Left cardiac atrium (tissue), 4 donors: ENCODE measurements at regions of chr1 and their contacts with region 1.

Region 1: DNA sequence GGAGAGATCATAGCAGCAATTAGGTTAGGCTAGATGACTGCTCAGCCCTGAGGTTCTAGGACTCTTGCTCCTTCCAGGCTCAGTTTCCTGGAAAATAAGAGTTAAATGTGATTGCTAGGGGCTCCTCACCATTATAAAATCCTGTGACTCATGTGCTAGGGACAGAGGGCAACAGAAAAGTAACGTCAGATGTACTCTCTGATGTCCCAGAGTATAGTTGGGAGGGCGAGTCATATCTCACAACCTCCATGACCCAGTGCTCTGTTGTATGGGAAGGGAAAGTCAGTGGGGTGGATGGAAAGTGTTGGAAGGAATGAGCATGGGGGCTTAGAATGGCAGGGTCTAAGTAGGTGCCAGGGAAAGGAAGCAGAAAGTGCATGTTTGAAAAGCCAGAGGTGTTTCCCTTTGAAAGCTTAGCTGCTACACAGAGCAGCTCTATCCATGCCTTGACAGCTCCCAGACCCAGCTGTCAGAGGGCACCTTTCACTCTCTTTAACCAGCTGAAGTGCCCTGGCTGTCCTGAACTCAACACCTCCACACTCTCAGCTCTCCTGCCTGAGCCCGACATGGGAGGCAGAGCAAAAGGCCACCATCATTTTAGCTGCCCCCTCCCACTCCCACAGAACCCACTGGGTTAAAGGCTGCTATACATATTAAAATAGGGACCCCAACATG is 11.6 kb downstream of the GJA5 start:
- DNase-seq: peak; percentile 38
- ATAC-seq: peak; percentile 92 to 95

Region 2: GRCh38 chr1:147812799-147813198 is 64.0 kb after region 1 on chr1:
- intact Hi-C with region 1: loop called in 1 of 2 experiments (anchors 5 kb)
- DNase-seq: no peak
- ATAC-seq: no peak